GM18951 (cell line): ENCODE measurements at regions of chr15 and their contacts with region 1.

Region 1: GRCh38 chr15:59741274-59741906 is 52.3 kb upstream of the BNIP2 start:
- POLR2A ChIP-seq: no peak

Region 2: GRCh38 chr15:59873644-59874272 is 132.4 kb after region 1 on chr15:
- in situ Hi-C with region 1: no loop called
- POLR2A ChIP-seq: no peak

Region 3: DNA sequence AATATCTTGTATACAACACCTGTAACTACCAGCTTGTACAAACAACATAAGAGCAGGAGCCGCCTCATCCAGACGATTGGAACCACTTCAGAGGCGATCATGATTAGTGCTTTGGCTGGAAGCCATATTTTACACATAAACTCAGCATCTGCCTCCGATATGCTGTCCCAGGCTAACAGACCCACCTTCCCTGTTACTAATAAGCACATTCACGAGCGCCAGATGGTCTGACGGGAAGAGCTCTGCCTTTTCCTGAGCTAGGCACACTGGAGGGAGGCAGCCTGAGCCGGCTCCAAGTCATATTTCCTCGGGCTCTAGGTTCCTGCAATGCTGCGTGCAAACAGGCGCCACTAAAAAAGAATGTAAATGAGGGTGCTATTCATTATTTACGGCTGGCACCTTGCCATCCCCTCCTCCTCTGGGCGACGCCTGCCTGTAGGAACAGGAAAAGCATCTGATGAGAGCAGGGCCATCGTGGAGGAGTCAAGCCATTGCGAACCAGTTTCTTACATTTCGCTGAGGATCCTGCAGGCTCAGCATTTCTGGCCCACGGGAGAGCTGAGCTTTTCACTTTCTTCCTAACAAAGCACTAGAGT is 558.2 kb after region 1 on chr15:
- in situ Hi-C with region 1: loop called (anchors 25 kb)
- POLR2A ChIP-seq: no peak